ENCODE measurements at regions of chr11 and their contacts with region 1.

Region 1: DNA sequence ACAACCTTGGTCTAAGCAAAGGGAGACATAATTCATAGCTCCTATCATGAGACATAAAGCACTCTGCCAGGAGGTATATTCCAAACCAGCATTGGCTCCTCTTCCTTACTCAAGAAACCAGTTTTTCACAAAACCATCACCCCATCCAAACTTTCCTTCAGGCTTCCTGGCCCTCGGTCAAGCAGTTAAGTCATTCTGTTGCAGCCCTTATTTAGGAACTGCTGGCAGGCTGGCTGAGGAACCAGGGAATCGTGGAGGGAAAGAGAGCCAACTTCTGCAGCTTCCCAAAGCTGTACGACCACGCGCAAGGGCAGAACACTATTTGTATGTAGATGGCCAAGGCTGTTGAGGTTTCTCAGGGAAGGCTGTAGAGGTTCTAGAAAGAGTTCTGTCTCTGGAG is 680 bp downstream of the IFT46 start:
- DNase-seq: peak in 2 of 9 experiments; percentile 15 to 47
- ATAC-seq: no peak
- H3K4me3 ChIP-seq: no peak overlapping the region
- H3K4me3 Mint-ChIP-seq: peak overlapping the region; percentile 71
- H3K27ac ChIP-seq: no peak overlapping the region
- H3K27ac Mint-ChIP-seq: peak overlapping the region; percentile 78
- H3K4me1 ChIP-seq: peaks cover 5% of the 10 kb centered on the region
- H3K4me1 Mint-ChIP-seq: peaks cover 22% of the 10 kb centered on the region
- H3K27me3 ChIP-seq: no peaks in the 10 kb centered on the region
- H3K27me3 Mint-ChIP-seq: no peaks in the 10 kb centered on the region
- CTCF ChIP-seq: no peak

Region 2: GRCh38 chr11:118364956-118365615 is 200.0 kb before region 1 on chr11:
- CTCF ChIA-PET with region 1: no interaction called
- POLR2A ChIA-PET with region 1: no interaction called
- intact Hi-C with region 1: loop called in 1 of 2 experiments (anchors 5 kb)
- DNase-seq: no peak
- ATAC-seq: no peak
- H3K4me3 ChIP-seq: no peak overlapping the region
- H3K4me3 Mint-ChIP-seq: no peak overlapping the region
- H3K27ac ChIP-seq: no peak overlapping the region
- H3K27ac Mint-ChIP-seq: no peak overlapping the region
- H3K4me1 ChIP-seq: peaks cover 32% of the 10 kb centered on the region
- H3K4me1 Mint-ChIP-seq: peaks cover 43% of the 10 kb centered on the region
- H3K27me3 ChIP-seq: no peaks in the 10 kb centered on the region
- H3K27me3 Mint-ChIP-seq: no peaks in the 10 kb centered on the region
- CTCF ChIP-seq: no peak

Region 3: DNA sequence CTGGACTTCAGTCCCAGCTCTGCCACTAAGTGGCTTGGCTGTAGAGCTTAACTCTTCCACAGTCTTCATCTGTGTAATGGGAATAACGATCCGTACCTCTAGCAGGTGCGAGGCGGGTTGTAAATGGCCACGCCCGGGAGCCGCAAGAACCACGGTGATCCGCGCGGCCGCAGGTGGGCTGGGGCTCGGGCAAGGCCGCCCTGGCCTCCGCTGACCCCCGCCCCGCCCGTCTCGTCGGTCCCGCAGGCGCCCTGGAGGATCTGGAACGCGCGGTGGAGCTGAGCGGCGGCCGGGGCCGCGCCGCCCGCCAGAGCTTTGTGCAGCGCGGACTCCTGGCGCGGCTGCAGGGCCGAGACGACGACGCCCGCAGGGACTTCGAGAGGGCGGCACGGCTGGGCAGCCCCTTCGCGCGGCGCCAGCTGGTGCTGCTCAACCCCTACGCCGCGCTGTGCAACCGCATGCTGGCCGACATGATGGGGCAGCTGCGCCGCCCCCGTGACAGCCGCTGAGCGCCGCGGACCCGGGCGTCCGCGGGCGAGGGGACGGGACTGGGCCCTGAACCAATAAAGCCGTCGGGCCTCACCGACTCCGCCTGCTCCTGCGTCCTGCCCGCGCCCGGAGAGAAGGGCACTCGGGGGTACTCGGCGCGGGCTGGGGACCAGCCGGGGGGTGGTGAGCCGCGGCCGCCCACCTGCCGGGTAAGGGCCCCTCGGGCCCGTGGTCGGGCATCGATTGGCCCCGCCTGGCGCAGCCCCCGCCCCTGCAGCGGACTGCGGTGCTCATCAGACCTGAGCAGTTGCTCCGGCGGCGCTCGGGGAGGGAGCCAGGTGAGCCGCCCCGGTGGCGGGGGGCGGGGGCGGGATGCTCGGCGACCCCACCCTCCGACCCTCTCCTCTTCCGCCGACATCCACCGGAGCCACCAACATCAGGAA is 34.4 kb before region 1 on chr11 and contains the start of gene TMEM25:
- CTCF ChIA-PET with region 1: no interaction called
- POLR2A ChIA-PET with region 1: interaction called, 3 read pairs
- intact Hi-C with region 1: loop called (anchors 1 to 2 kb)
- DNase-seq: peak; percentile 22 to 82 (median 73)
- ATAC-seq: peak; percentile 85
- H3K4me3 ChIP-seq: peak within 1 kb of the TSS; percentile 58 to 99
- H3K4me3 Mint-ChIP-seq: peak within 1 kb of the TSS; percentile 98
- H3K27ac ChIP-seq: peak within 1 kb of the TSS; percentile 18 to 67
- H3K27ac Mint-ChIP-seq: peak within 1 kb of the TSS; percentile 90
- H3K4me1 ChIP-seq: peaks cover 24% of the 10 kb centered on the region
- H3K4me1 Mint-ChIP-seq: peaks cover 37% of the 10 kb centered on the region
- H3K27me3 ChIP-seq: no peaks in the 10 kb centered on the region
- H3K27me3 Mint-ChIP-seq: no peaks in the 10 kb centered on the region
- CTCF ChIP-seq: no peak
- total RNA-seq, gene TMEM25: 11.3 to 14.0 TPM

Region 4: DNA sequence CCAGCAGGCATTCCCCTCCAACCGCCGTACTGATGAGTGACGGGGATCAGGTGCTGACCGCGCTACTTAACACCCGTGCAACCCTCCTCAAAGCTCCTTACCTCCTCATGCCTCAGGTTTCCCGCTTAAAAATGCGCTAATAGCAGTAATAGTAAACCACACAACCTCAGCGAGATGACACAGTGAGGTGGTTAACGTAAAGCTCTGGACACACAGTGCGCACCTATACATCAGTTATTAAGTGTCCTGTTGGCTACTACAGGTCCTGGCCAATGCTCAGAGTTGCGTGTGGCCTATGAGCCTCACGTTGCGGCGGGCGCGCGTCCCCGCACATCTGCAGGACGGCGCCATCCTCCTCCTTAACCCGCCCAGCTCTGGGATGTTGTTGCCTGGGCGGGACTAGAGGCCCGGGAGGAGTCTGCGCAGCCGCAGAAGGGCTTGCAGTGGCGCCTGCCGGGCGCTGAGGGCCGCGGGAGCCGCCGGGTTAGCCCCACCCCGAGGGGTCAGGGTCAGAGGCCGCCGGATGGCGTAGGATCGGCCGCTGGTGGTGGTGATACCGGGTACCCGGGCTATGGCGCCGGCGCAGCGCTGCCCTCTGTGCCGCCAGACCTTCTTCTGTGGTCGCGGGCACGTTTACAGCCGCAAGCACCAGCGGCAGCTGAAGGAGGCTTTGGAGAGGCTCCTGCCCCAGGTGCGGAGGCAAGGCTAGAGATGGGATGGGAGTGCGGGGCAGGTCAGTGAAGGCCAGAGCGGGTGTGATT is 432.8 kb after region 1 on chr11 and contains the start of gene CENATAC:
- CTCF ChIA-PET with region 1: no interaction called
- POLR2A ChIA-PET with region 1: no interaction called
- intact Hi-C with region 1: loop called in 1 of 2 experiments (anchors 2 kb)
- DNase-seq: peak; percentile 87 to 97 (median 96)
- ATAC-seq: peak; percentile 94
- H3K4me3 ChIP-seq: peak within 1 kb of the TSS; percentile 89 to 95
- H3K4me3 Mint-ChIP-seq: peak within 1 kb of the TSS; percentile 84
- H3K27ac ChIP-seq: peak within 1 kb of the TSS; percentile 59 to 92
- H3K27ac Mint-ChIP-seq: peak within 1 kb of the TSS; percentile 88
- H3K4me1 ChIP-seq: peaks cover 23% of the 10 kb centered on the region
- H3K4me1 Mint-ChIP-seq: peaks cover 36% of the 10 kb centered on the region
- H3K27me3 ChIP-seq: no peaks in the 10 kb centered on the region
- H3K27me3 Mint-ChIP-seq: no peaks in the 10 kb centered on the region
- CTCF ChIP-seq: no peak
- total RNA-seq, gene CENATAC: 103 to 116 TPM